Caco-2 (cell line): ENCODE measurements at regions of chr3 and their contacts with region 1.

Region 1: DNA sequence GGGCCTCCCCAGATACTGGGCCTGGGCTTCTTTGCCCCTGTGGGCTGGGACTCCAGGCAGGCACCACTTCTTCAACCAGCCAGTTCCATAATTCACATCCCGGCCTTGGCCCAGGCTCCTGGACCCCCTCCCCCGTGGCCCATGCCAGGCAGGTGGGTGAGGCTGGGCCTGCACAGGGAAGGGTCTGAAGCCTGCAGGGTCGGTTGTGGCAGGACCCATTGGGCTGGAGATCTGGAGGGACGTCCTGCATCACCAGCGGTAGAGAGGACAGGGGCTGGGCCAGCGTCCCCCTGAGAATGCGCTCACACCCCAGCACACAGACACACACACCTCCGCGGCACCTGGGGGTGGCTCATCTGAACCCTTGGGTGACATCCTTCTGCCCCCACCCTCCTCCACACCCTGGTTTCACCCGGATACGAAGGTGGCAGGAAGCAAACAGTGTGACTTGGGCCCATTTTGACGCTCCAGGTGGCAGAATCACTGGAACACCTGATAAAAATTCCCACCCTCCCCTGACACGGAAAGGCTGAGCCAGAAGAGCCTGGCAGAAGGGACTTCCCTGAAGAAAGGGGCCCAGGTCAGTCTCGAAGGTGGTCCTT is 15.4 kb downstream of the ZDHHC19 start:
- DNase-seq: no peak
- H3K4me3 ChIP-seq: no peak overlapping the region
- H3K4me3 Mint-ChIP-seq: no peak overlapping the region
- H3K27ac Mint-ChIP-seq: no peak overlapping the region
- H3K4me1 ChIP-seq: no peaks in the 10 kb centered on the region
- H3K4me1 Mint-ChIP-seq: no peaks in the 10 kb centered on the region
- H3K27me3 ChIP-seq: no peaks in the 10 kb centered on the region
- H3K27me3 Mint-ChIP-seq: no peaks in the 10 kb centered on the region
- CTCF ChIP-seq: no peak

Region 2: GRCh38 chr3:196023947-196024346 is 171.8 kb before region 1 on chr3:
- CTCF ChIA-PET with region 1: interaction called, 4 read pairs
- POLR2A ChIA-PET with region 1: no interaction called
- intact Hi-C with region 1: loop called (anchors 1 kb)
- DNase-seq: no peak
- H3K4me3 ChIP-seq: no peak overlapping the region
- H3K4me3 Mint-ChIP-seq: no peak overlapping the region
- H3K27ac Mint-ChIP-seq: no peak overlapping the region
- H3K4me1 ChIP-seq: no peaks in the 10 kb centered on the region
- H3K4me1 Mint-ChIP-seq: no peaks in the 10 kb centered on the region
- H3K27me3 ChIP-seq: no peaks in the 10 kb centered on the region
- H3K27me3 Mint-ChIP-seq: peaks cover 9% of the 10 kb centered on the region
- CTCF ChIP-seq: no peak

Region 3: DNA sequence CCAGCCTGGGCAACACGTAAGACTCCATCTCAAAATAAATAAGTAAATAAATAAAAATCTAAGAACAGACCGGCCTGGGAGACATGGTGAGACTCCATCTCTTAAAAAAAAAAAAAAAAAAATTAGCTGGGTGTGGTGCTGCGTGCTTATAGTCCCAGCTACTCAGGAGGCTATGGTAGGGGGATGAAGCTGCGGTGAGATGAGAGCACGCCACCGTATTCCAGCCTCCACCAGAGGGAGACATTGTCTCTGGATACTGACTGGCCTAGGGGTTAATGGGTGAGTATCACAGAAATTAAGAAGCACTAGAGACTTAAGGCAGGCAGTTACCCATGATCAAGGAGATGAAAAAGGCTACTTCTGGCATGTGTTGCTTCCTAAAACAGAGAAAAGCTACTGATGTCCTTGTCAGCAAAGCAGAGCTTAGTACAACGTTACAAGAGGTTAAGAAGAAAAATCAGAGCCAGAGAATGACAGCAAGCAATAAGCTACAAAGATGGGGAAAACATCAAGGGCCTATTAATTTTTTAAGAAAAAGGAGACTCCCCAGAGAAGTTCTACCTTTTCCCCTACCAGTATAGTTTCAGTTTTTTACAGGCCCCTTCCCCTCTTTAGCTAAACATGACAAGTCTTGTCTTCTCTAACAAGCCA is 122.5 kb before region 1 on chr3:
- CTCF ChIA-PET with region 1: interaction called, 6 read pairs
- POLR2A ChIA-PET with region 1: no interaction called
- intact Hi-C with region 1: loop called (anchors 1 kb)
- DNase-seq: peak; percentile 65 to 76
- H3K4me3 ChIP-seq: no peak overlapping the region
- H3K4me3 Mint-ChIP-seq: no peak overlapping the region
- H3K27ac Mint-ChIP-seq: no peak overlapping the region
- H3K4me1 ChIP-seq: no peaks in the 10 kb centered on the region
- H3K4me1 Mint-ChIP-seq: no peaks in the 10 kb centered on the region
- H3K27me3 ChIP-seq: no peaks in the 10 kb centered on the region
- H3K27me3 Mint-ChIP-seq: no peaks in the 10 kb centered on the region
- CTCF ChIP-seq: peak; percentile 77 to 79